Activated T-helper 1 cell treated with anti-CD3 and anti-CD28 coated beads, Interleukin-12 subunit alpha, Interleukin-12 subunit beta, Interleukin-2, Interleukin-4 antibody, amounts not matched to agents 30 ng/mL and 10 ng/mL and 1 ng/mL, durations not matched to agents 14 hours and 24 hours and 36 hours (primary cell): ENCODE measurements at regions of chr9 and their contacts with region 1.

Region 1: DNA sequence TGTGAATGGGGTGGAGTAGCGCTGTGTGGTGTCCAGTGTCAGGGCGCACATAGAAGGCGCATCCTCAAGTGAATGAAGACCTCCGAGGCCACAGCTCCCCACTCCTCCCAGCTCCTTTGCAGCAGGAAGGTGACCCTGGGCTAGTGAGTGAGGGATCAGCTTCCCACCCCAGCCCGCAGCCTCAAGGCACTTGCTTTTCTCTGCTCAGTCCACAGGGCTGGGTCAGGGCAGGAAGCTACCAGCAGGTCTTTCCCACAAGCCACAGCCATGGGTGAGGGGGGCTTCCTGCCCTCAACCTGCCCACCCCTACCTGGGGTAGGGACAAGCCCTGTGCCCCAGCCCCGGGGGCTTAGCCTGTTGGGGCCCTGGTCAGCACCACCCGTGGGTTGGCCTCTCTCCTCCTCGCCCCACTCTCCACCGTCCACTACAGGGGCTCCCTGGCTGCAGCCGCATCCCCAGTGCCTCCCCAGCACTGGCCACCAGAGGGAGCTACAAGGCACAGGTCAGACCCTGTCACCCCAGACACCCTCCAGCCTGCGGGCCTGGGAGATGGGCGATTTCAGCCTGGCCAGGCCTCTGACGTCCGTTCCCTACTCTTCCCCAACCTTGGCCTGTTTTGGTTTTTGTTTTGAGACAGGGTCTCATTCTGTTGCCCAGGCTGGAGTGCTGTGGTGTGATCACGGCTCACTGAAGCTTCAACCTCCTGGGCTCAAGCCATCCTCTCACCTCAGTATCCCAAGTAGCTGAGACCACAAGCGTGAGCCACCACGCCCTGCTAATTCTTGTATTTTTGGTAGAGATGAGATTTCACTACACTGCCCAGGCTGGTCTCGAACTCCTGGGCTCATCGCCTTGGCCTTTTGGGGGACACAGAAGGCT is 1.3 kb upstream of the ABCA2 start:
- DNase-seq: peak; percentile 63
- H3K4me3 Mint-ChIP-seq: peak overlapping the region; percentile 80
- H3K27ac Mint-ChIP-seq: peak overlapping the region; percentile 67
- H3K4me1 Mint-ChIP-seq: peaks cover 30% of the 10 kb centered on the region
- H3K27me3 Mint-ChIP-seq: no peaks in the 10 kb centered on the region

Region 2: DNA sequence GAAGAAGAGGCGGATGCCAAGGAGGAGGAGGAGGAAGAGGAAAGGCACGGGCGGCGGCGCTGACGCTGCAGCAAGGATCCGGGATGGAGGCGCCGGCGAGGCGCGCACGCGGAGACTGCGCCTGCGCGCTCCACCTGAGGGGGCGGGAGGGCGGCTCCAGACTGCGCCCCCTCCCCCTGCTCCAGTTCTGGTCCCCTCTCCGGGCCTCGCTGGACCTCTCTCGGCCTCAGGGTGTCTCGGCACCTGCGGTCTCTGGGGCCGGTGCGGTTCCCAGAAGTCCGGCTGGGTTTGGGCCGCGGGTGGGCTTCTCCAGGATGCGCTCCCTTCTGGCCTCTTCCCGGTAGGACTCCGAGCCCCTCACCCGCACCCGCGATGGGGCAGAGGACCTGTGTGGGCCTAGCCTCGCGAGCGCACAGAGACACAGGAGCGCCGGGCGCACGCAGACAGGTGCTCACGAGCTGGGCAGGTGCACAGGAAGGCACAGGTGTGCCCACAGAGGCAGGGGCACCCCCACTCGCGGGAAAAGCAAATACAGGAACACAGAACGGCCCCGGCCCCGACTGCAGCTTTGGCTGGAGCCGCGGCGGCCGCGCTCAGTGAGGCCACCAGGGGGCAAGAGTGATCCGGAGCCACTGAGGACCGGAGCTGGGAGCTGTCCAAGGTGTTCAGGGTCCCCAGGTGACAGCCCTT is 16.9 kb after region 1 on chr9 and contains the start of gene NPDC1:
- intact Hi-C with region 1: loop called (anchors 1 kb)
- DNase-seq: peak; percentile 81
- H3K4me3 Mint-ChIP-seq: peak within 1 kb of the TSS; percentile 77
- H3K27ac Mint-ChIP-seq: peak within 1 kb of the TSS; percentile 44
- H3K4me1 Mint-ChIP-seq: peaks cover 5% of the 10 kb centered on the region
- H3K27me3 Mint-ChIP-seq: peaks cover 29% of the 10 kb centered on the region
- total RNA-seq, gene NPDC1: 78.2 and 80.1 TPM in 2 replicates

Region 3: DNA sequence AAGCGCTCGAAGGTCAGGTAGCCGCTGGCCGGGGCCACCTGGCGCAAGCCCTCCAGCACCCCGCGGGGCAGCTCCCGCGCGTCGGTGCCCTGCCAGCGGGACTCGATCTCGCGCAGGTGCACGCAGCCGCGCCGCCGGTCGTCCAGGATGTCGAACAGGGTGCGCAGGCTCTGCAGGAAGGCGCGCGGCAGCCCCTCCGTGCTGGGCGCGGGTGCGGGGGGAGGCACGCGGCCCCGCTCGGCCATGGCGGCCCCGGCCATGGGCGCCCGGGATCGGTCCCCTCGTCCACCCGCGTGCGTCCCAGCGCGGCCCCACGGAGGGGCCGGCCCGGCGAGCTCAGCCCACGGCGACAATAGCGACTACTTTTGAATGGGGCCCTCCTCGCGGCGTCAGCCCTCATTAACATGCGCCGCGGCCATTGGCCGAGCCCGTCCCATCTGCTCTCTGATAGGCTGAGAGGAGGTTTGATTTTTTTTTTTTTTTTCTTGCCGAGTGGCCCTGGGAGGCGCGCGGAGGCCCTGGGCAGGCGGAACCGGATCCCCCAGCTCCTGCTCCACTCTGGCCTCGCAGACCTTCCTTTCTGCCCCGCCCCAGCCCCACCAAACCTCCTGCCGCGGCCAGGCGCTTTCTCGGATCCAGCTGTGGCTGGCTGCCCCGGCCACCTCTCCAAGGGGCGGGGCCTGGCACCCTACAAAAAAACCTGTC is 41.1 kb after region 1 on chr9 and contains the start of gene SAPCD2:
- intact Hi-C with region 1: loop called (anchors 2 kb)
- DNase-seq: peak; percentile 85
- H3K4me3 Mint-ChIP-seq: peak within 1 kb of the TSS; percentile 86
- H3K27ac Mint-ChIP-seq: peak within 1 kb of the TSS; percentile 91
- H3K4me1 Mint-ChIP-seq: peaks cover 16% of the 10 kb centered on the region
- H3K27me3 Mint-ChIP-seq: peaks cover 3% of the 10 kb centered on the region
- total RNA-seq, gene SAPCD2: 23.9 and 25.1 TPM in 2 replicates

Region 4: GRCh38 chr9:137150617-137151457 is 121.5 kb after region 1 on chr9:
- intact Hi-C with region 1: loop called (anchors 10 kb)
- DNase-seq: peak; percentile 60
- H3K4me3 Mint-ChIP-seq: no peak overlapping the region
- H3K27ac Mint-ChIP-seq: no peak overlapping the region
- H3K4me1 Mint-ChIP-seq: peaks cover 4% of the 10 kb centered on the region
- H3K27me3 Mint-ChIP-seq: peaks cover 2% of the 10 kb centered on the region